CD4-positive, alpha-beta T cell (primary cell): ENCODE measurements at regions of chr12 and their contacts with region 1.

Region 1: GRCh38 chr12:64669270-64669842 is 59.1 kb downstream of the RASSF3 start:
- DNase-seq: peak in 13 of 14 experiments; percentile 23 to 93 (median 48)
- ATAC-seq: peak; percentile 81
- H3K4me3 ChIP-seq: peak overlapping the region; percentile 59
- H3K4me3 Mint-ChIP-seq: peak overlapping the region; percentile 91
- H3K27ac ChIP-seq: peak overlapping the region; percentile 82 to 91
- H3K27ac Mint-ChIP-seq: peak overlapping the region; percentile 98
- H3K4me1 ChIP-seq: peaks cover 87% of the 10 kb centered on the region
- H3K4me1 Mint-ChIP-seq: peaks cover 94% of the 10 kb centered on the region
- H3K27me3 ChIP-seq: no peaks in the 10 kb centered on the region
- H3K27me3 Mint-ChIP-seq: no peaks in the 10 kb centered on the region
- CTCF ChIP-seq: no peak

Region 2: GRCh38 chr12:64551698-64552097 is 117.7 kb before region 1 on chr12:
- CTCF ChIA-PET with region 1: interaction called, 14 read pairs
- POLR2A ChIA-PET with region 1: interaction called, 11 read pairs
- intact Hi-C with region 1: no loop called
- DNase-seq: no peak
- ATAC-seq: no peak
- H3K4me3 ChIP-seq: no peak overlapping the region
- H3K4me3 Mint-ChIP-seq: no peak overlapping the region
- H3K27ac ChIP-seq: no peak overlapping the region
- H3K27ac Mint-ChIP-seq: no peak overlapping the region
- H3K4me1 ChIP-seq: no peaks in the 10 kb centered on the region
- H3K4me1 Mint-ChIP-seq: peaks cover 13% of the 10 kb centered on the region
- H3K27me3 ChIP-seq: no peaks in the 10 kb centered on the region
- H3K27me3 Mint-ChIP-seq: no peaks in the 10 kb centered on the region
- CTCF ChIP-seq: no peak

Region 3: GRCh38 chr12:64616201-64616600 is 53.2 kb before region 1 on chr12:
- CTCF ChIA-PET with region 1: interaction called, 4 read pairs
- POLR2A ChIA-PET with region 1: interaction called, 137 read pairs
- intact Hi-C with region 1: no loop called
- DNase-seq: no peak
- ATAC-seq: no peak
- H3K4me3 ChIP-seq: no peak overlapping the region
- H3K4me3 Mint-ChIP-seq: peak overlapping the region; percentile 72
- H3K27ac ChIP-seq: no peak overlapping the region
- H3K27ac Mint-ChIP-seq: peak overlapping the region; percentile 90
- H3K4me1 ChIP-seq: peaks cover 45% of the 10 kb centered on the region
- H3K4me1 Mint-ChIP-seq: peaks cover 78% of the 10 kb centered on the region
- H3K27me3 ChIP-seq: no peaks in the 10 kb centered on the region
- H3K27me3 Mint-ChIP-seq: no peaks in the 10 kb centered on the region
- CTCF ChIP-seq: no peak

Region 4: GRCh38 chr12:64633656-64634337 is 35.6 kb before region 1 on chr12:
- CTCF ChIA-PET with region 1: no interaction called
- POLR2A ChIA-PET with region 1: interaction called, 12 read pairs
- intact Hi-C with region 1: no loop called
- DNase-seq: peak in 7 of 14 experiments; percentile 38 to 67 (median 43)
- ATAC-seq: peak; percentile 47
- H3K4me3 ChIP-seq: no peak overlapping the region
- H3K4me3 Mint-ChIP-seq: peak overlapping the region; percentile 61
- H3K27ac ChIP-seq: peak overlapping the region in 1 of 2 donors; percentile 57
- H3K27ac Mint-ChIP-seq: peak overlapping the region; percentile 71
- H3K4me1 ChIP-seq: peaks cover 65% of the 10 kb centered on the region
- H3K4me1 Mint-ChIP-seq: peaks cover 82% of the 10 kb centered on the region
- H3K27me3 ChIP-seq: no peaks in the 10 kb centered on the region
- H3K27me3 Mint-ChIP-seq: no peaks in the 10 kb centered on the region
- CTCF ChIP-seq: no peak

Region 5: GRCh38 chr12:64687816-64688215 is 18.5 kb after region 1 on chr12:
- CTCF ChIA-PET with region 1: interaction called, 7 read pairs
- POLR2A ChIA-PET with region 1: interaction called, 808 read pairs
- intact Hi-C with region 1: loop called in 1 of 2 experiments (anchors 1 kb)
- DNase-seq: peak in 3 of 14 experiments; percentile 34 to 40 (median 37)
- ATAC-seq: no peak
- H3K4me3 ChIP-seq: no peak overlapping the region
- H3K4me3 Mint-ChIP-seq: peak overlapping the region; percentile 36
- H3K27ac ChIP-seq: peak overlapping the region; percentile 42 to 58
- H3K27ac Mint-ChIP-seq: peak overlapping the region; percentile 98
- H3K4me1 ChIP-seq: peaks cover 97% of the 10 kb centered on the region
- H3K4me1 Mint-ChIP-seq: peaks cover 73% of the 10 kb centered on the region
- H3K27me3 ChIP-seq: no peaks in the 10 kb centered on the region
- H3K27me3 Mint-ChIP-seq: no peaks in the 10 kb centered on the region
- CTCF ChIP-seq: no peak